Activated CD4-positive, alpha-beta memory T cell treated with anti-CD3 and anti-CD28 coated beads for 36 hours (primary cell): ENCODE measurements at regions of chr13 and their contacts with region 1.

Region 1: DNA sequence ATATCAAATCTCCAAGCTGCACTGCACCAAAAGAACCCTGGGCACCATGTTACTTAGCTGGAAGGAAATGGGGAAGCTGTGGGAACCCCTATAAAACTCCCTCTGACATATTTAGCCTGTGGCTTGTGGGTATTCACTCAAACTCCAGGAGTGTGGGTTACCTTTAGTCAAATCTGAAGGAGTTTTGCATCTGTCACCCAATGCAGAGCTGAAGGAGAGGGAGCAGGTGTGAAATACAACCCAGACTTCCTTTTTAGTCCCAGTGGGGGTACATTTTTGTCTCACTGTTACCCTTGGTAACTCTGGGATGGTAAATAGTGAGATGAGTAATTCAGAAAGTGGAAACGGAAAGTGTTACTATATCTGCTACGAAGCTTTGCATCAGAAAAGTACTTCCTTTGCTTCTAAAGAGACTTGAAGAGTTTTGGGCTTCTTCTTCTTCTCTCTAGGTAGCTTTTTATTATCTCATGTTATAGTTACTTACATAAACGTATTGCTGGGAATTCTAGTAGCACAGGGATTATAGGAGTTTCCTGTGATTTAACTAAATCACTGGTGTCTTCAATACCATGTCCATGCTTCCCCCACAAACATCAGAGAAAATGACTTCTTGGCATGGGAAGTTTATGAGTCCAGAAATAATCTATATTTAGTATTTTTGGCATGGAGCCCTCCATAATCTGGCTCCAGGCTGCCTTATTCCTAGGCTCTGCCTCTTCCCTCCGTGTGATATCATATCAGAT is 105.9 kb downstream of the AKAP11 start:
- DNase-seq: peak; percentile 61
- H3K4me3 Mint-ChIP-seq: peak overlapping the region; percentile 30
- H3K27ac Mint-ChIP-seq: peak overlapping the region; percentile 92
- H3K4me1 Mint-ChIP-seq: peaks cover 61% of the 10 kb centered on the region
- H3K27me3 Mint-ChIP-seq: no peaks in the 10 kb centered on the region

Region 2: DNA sequence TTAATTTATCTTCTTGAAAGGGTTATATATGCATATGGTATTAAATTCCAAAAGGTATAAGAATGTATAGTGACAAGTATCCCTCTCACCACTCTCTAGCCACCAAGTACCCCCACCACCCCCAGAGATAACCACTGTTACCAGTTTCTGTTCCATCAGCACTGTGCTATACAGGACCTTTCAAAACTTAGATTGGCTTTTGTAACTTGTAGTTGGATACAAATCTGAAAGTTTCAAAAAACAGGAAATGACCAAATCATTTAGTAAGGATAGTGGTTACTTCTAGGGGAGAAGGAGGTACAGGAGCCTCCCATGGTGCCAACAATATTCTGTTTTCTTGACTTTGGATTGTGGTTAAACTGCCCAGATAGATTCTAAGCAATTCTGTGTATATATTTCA is 49.1 kb before region 1 on chr13:
- CTCF ChIA-PET with region 1: no interaction called
- POLR2A ChIA-PET with region 1: no interaction called
- intact Hi-C with region 1: loop called (anchors 1 kb)
- DNase-seq: no peak
- H3K4me3 Mint-ChIP-seq: no peak overlapping the region
- H3K27ac Mint-ChIP-seq: peak overlapping the region; percentile 60
- H3K4me1 Mint-ChIP-seq: peaks cover 22% of the 10 kb centered on the region
- H3K27me3 Mint-ChIP-seq: no peaks in the 10 kb centered on the region

Region 3: DNA sequence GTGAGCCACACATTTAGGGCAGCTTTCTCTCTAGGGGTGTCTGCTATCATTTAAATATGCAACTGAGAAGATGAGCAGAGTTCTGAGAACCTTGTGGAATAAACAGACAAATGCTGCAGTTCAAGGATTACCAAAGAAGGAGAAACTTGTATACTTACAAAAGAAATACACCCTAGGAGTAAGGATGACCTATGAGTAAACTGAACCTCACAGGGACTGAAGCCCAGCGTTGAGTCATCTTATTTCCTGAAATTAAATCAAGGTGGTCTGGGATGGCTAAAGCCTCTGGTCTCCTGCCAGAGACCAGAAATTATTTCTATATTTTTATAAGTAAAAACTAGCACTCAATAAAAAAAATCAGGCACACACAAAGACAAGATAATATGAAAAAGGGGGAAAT is 443.6 kb after region 1 on chr13:
- CTCF ChIA-PET with region 1: no interaction called
- POLR2A ChIA-PET with region 1: no interaction called
- intact Hi-C with region 1: no loop called
- DNase-seq: no peak
- H3K4me3 Mint-ChIP-seq: no peak overlapping the region
- H3K27ac Mint-ChIP-seq: no peak overlapping the region
- H3K4me1 Mint-ChIP-seq: no peaks in the 10 kb centered on the region
- H3K27me3 Mint-ChIP-seq: peaks cover 11% of the 10 kb centered on the region